ENCODE measurements at regions of chr10 and their contacts with region 1.

Region 1: GRCh38 chr10:35642027-35642792 is at the start of gene FZD8:
- DNase-seq: peak; percentile 95
- H3K4me3 ChIP-seq: peak within 1 kb of the TSS; percentile 58 to 74 (median 72)
- H3K27ac ChIP-seq: peak within 1 kb of the TSS; percentile 25
- H3K4me1 ChIP-seq: peaks cover 38% of the 10 kb centered on the region
- H3K27me3 ChIP-seq: peaks cover 2 to 25% of the 10 kb centered on the region in 2 experiments
- CTCF ChIP-seq: peak in 1 of 2 donors; percentile 35
- POLR2A ChIP-seq: peak; percentile 98
- total RNA-seq, gene FZD8: 9.1 and 11.1 TPM in 2 replicates

Region 2: DNA sequence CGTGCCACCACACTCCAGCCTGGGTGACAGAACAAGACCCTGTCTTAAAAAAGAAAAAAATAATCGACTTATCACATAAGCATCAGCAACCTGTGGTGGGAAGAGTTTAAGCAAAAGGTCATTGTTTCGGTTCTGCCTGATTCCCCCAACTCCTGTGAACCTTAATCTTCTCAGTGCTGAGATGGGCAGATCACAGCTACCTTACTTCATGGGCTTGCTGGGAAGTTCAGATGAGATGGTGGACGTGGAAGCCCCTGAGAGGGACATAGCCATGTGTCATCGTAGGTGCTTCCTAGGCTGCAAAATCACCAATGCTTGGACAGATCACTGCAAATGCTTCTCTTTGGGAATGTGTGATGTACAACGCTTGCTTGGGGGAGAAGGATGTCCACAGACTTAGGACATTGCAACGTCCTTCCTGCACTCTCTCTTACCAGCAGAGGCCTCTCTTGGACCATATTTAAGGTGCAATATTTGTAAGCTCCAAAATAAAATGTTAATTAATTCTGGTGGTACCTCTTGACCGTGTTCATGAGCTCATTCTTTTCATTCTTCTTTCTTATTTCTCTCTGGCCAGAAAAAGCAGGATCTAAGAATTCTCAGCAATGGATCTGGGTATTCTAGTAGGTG is 28.5 kb before region 1 on chr10:
- CTCF ChIA-PET with region 1: interaction called, 68 read pairs
- POLR2A ChIA-PET with region 1: no interaction called
- dilution Hi-C with region 1: no loop called
- intact Hi-C with region 1: no loop called
- DNase-seq: peak; percentile 44
- H3K4me3 ChIP-seq: no peak overlapping the region
- H3K27ac ChIP-seq: no peak overlapping the region
- H3K4me1 ChIP-seq: no peaks in the 10 kb centered on the region
- H3K27me3 ChIP-seq: peaks cover 19 to 22% of the 10 kb centered on the region in 2 experiments
- CTCF ChIP-seq: peak; percentile 30 to 46
- POLR2A ChIP-seq: no peak

Region 3: DNA sequence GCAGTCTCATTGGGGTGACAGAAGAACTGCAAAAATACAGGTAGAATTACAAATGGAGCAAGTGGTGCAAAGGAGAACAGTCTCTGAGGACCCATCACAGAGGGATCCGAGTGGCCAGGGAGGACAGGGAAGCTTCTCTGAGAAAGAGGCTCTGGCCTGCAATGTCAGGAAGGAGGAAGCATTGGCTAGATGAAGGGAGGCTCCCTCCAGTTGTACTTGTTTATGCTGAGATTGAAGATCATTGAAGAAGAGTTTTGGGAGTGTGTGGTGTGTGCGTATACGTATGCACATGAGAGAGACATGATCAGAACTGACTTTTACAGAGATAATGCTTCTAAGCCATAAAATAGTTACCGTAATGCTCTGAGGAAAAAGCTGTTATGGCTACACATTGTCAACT is 274.6 kb after region 1 on chr10:
- CTCF ChIA-PET with region 1: interaction called, 85 read pairs
- POLR2A ChIA-PET with region 1: no interaction called
- dilution Hi-C with region 1: no loop called
- intact Hi-C with region 1: loop called (anchors 5 kb)
- DNase-seq: no peak
- H3K4me3 ChIP-seq: no peak overlapping the region
- H3K27ac ChIP-seq: no peak overlapping the region
- H3K4me1 ChIP-seq: peaks cover 20% of the 10 kb centered on the region
- H3K27me3 ChIP-seq: no peaks in the 10 kb centered on the region
- CTCF ChIP-seq: peak in 1 of 2 donors; percentile 20
- POLR2A ChIP-seq: no peak

Region 4: DNA sequence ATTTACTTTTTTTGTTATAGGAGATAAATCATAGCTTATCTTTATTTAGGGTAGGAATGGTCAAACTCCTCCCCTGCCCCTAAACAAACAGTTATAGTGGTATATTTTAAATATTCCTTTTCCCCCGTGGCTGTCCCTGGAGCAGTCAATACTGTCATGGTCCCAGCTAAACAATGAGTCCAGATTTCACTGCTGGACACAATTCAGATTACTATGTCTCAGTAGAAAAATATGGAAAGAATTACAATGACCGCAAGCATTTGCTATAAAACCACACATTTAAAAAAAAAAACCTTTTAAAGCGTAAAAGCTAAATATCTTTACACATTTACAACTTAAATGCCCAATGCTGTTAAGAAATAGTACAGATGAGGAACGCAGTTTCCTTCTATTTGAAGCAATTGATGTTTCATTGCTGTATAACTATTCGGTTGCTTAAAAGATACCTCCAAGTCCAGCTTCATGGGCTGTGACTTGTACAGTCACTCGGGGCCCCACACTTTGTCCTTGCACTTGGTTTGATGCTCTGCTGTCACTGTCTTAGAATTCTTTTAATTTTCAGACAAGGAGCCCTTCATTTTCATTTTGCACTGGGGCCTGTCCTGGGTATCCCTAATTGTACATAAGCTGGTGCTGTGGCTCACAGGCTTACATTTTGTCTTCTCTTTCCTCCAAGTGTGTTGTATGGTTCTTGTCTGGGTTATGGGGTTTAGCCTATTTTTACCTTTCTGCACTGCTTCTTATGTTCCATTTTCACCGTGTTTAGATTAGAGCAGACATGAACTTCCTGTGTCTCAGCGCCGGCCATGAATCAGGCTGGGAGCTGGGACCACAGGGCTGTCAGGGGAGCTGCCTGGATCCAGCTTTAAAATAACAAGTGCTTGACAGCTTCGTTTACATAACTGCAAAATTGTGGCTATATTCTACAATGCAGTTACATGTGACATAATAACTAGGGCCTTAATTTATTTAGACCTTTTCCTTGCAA is 530.0 kb after region 1 on chr10:
- CTCF ChIA-PET with region 1: interaction called, 6 read pairs
- POLR2A ChIA-PET with region 1: no interaction called
- dilution Hi-C with region 1: no loop called
- intact Hi-C with region 1: loop called (anchors 1 kb)
- DNase-seq: peak; percentile 95
- H3K4me3 ChIP-seq: peak overlapping the region in 1 of 3 experiments; percentile 22
- H3K27ac ChIP-seq: peak overlapping the region; percentile 97
- H3K4me1 ChIP-seq: peaks cover 38% of the 10 kb centered on the region
- H3K27me3 ChIP-seq: no peaks in the 10 kb centered on the region
- CTCF ChIP-seq: no peak
- POLR2A ChIP-seq: no peak

Region 5: GRCh38 chr10:36489611-36490228 is 847.5 kb after region 1 on chr10:
- CTCF ChIA-PET with region 1: interaction called, 11 read pairs
- POLR2A ChIA-PET with region 1: no interaction called
- dilution Hi-C with region 1: no loop called
- intact Hi-C with region 1: loop called (anchors 2 kb)
- DNase-seq: peak; percentile 93
- H3K4me3 ChIP-seq: no peak overlapping the region
- H3K27ac ChIP-seq: peak overlapping the region; percentile 91
- H3K4me1 ChIP-seq: peaks cover 53% of the 10 kb centered on the region
- H3K27me3 ChIP-seq: no peaks in the 10 kb centered on the region
- CTCF ChIP-seq: no peak
- POLR2A ChIP-seq: no peak

Region 6: GRCh38 chr10:36608251-36608650 is 966.0 kb after region 1 on chr10:
- CTCF ChIA-PET with region 1: no interaction called
- POLR2A ChIA-PET with region 1: no interaction called
- dilution Hi-C with region 1: no loop called
- intact Hi-C with region 1: loop called (anchors 5 kb)
- DNase-seq: peak; percentile 91
- H3K4me3 ChIP-seq: no peak overlapping the region
- H3K27ac ChIP-seq: peak overlapping the region; percentile 75
- H3K4me1 ChIP-seq: peaks cover 36% of the 10 kb centered on the region
- H3K27me3 ChIP-seq: no peaks in the 10 kb centered on the region
- CTCF ChIP-seq: no peak
- POLR2A ChIP-seq: no peak

Region 7: GRCh38 chr10:36779234-36779846 is 1137.1 kb after region 1 on chr10:
- CTCF ChIA-PET with region 1: interaction called, 316 read pairs
- POLR2A ChIA-PET with region 1: no interaction called
- dilution Hi-C with region 1: no loop called
- intact Hi-C with region 1: loop called (anchors 1 kb)
- DNase-seq: peak; percentile 87
- H3K4me3 ChIP-seq: no peak overlapping the region
- H3K27ac ChIP-seq: no peak overlapping the region
- H3K4me1 ChIP-seq: no peaks in the 10 kb centered on the region
- H3K27me3 ChIP-seq: no peaks in the 10 kb centered on the region
- CTCF ChIP-seq: peak; percentile 57 to 64
- POLR2A ChIP-seq: no peak

Measured in endothelial cell of umbilical vein (primary cell).